ENCODE measurements at regions of chr2 and their contacts with region 1.

Region 1: DNA sequence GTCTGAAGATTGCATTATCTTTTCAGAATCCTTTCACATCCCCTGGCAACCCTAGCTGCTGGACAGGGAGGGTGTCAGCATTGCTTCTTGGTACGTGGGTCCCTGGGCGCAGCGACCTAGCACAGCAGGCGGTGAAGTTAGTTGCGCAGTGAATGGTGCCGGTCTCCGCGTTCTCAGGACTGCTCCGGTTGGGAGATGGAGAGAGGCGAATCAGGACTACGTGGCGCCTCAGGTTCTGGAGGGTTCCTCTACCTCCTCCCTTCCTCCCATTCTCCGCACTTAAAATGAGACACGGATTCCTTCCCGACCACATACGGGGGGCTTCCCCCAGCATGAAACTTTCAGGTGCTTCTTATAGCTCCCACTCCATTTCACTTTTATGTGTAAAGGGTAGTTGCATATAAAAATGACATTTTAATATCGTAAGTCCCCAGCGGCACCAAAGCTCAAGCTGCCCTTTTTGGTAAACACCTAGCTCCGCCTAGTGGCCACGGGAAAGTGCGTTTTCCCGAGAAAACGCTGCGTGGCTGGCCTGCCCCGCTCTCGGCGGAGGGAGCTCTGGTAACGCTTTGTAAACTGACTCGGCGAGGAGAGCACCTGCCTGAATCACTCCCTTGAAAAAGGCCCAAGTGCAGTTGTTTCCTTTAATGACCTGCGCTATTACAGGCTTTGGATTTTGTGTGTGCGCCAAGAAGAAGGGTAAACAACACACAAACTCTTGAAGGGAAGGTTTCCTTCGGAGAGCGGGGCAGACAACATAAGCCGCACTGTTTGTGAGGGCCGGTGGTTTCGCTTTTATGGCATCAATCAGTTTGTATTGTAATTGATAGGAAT is 32.9 kb upstream of the INHBB start:
- DNase-seq: peak; percentile 94
- H3K4me3 ChIP-seq: peak overlapping the region; percentile 10 to 63 (median 31)
- H3K27ac ChIP-seq: peak overlapping the region in 1 of 8 donors; percentile 31
- H3K4me1 ChIP-seq: peaks cover 5 to 29% (median 20%) of the 10 kb centered on the region in 6 donors
- H3K27me3 ChIP-seq: peaks cover 0 to 11% (median 0%) of the 10 kb centered on the region in 7 donors
- CTCF ChIP-seq: peak; percentile 76 to 91 (median 87)
- POLR2A ChIP-seq: no peak

Region 2: GRCh38 chr2:120109186-120110061 is 203.7 kb before region 1 on chr2:
- intact Hi-C with region 1: loop called (anchors 10 kb)
- DNase-seq: no peak
- H3K4me3 ChIP-seq: peak overlapping the region in 1 of 8 donors; percentile 39
- H3K27ac ChIP-seq: peak overlapping the region in 7 of 8 donors; percentile 35 to 83 (median 66)
- H3K4me1 ChIP-seq: peaks cover 13 to 37% (median 24%) of the 10 kb centered on the region in 6 donors
- H3K27me3 ChIP-seq: no peaks in the 10 kb centered on the region
- CTCF ChIP-seq: peak in 9 of 11 experiments; percentile 19 to 60 (median 42)
- POLR2A ChIP-seq: no peak

Measured in spleen (tissue), 13 donors.